Mammary epithelial cell (primary cell): ENCODE measurements at regions of chr1 and their contacts with region 1.

Region 1: GRCh38 chr1:113759333-113760101 is at the start of gene PHTF1:
- DNase-seq: peak; percentile 72
- H3K4me3 ChIP-seq: peak within 1 kb of the TSS; percentile 78 to 96 (median 90)
- H3K27ac ChIP-seq: peak within 1 kb of the TSS; percentile 83
- H3K4me1 ChIP-seq: peaks cover 8% of the 10 kb centered on the region
- H3K27me3 ChIP-seq: no peaks in the 10 kb centered on the region
- CTCF ChIP-seq: no peak
- total RNA-seq, gene PHTF1: 16.6 to 21.0 TPM

Region 2: DNA sequence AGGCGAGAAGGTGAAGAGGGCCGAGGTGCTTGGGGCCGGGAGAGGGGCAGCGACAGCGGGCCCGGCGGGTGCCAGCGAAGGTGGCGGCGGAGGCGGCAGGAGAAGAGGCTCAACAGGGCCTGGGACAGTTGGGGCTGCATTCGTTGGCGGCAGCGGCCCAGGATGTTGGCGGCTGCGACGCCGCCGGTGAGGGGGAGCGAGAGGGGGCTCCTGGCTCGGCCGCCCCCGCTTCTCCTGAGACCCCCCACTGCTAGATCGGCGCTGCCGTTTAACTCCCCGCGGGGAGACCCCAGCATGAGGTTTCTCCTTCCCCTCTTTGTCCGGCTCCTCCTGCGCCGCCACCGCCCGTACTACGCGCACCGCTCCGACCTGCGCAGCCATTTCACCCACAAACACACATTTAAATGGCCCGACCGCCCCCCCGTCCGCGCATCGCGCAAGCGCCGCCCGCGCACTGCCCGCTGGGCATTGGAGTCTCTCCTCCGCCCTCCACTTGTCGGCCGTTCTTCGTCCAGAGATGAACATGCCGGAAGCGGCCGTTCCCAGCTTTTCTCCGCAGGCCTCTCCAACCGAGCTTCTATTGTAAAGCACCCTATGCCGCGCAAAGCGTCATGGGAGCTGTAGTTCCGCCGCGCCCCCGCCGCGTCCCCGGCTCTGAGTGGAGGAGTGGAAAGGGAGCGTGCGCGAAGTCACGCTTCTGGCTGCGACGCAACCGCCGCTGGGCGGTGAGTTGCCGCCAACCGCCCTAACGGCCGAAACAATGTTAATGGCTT is 52.6 kb after region 1 on chr1 and contains the start of gene RSBN1:
- CTCF ChIA-PET with region 1: no interaction called
- dilution Hi-C with region 1: no loop called
- in situ Hi-C with region 1: no loop called
- intact Hi-C with region 1: loop called (anchors 2 kb)
- DNase-seq: peak; percentile 100
- H3K4me3 ChIP-seq: peak within 1 kb of the TSS; percentile 89 to 95 (median 89)
- H3K27ac ChIP-seq: peak within 1 kb of the TSS; percentile 89
- H3K4me1 ChIP-seq: peaks cover 18% of the 10 kb centered on the region
- H3K27me3 ChIP-seq: no peaks in the 10 kb centered on the region
- CTCF ChIP-seq: no peak
- total RNA-seq, gene RSBN1: 10.0 to 12.5 TPM

Region 3: GRCh38 chr1:113917400-113918082 is 158.0 kb after region 1 on chr1:
- CTCF ChIA-PET with region 1: no interaction called
- dilution Hi-C with region 1: no loop called
- in situ Hi-C with region 1: no loop called
- intact Hi-C with region 1: no loop called
- DNase-seq: peak; percentile 90
- H3K4me3 ChIP-seq: no peak overlapping the region
- H3K27ac ChIP-seq: no peak overlapping the region
- H3K4me1 ChIP-seq: peaks cover 11% of the 10 kb centered on the region
- H3K27me3 ChIP-seq: no peaks in the 10 kb centered on the region
- CTCF ChIP-seq: no peak

Region 4: GRCh38 chr1:114282751-114283403 is 523.4 kb after region 1 on chr1:
- CTCF ChIA-PET with region 1: no interaction called
- dilution Hi-C with region 1: no loop called
- in situ Hi-C with region 1: no loop called
- intact Hi-C with region 1: loop called (anchors 10 kb)
- DNase-seq: peak; percentile 64
- H3K4me3 ChIP-seq: no peak overlapping the region
- H3K27ac ChIP-seq: no peak overlapping the region
- H3K4me1 ChIP-seq: no peaks in the 10 kb centered on the region
- H3K27me3 ChIP-seq: no peaks in the 10 kb centered on the region
- CTCF ChIP-seq: peak; percentile 85 to 93